PC-3 (cell line): ENCODE measurements at regions of chr16 and their contacts with region 1.

Region 1: DNA sequence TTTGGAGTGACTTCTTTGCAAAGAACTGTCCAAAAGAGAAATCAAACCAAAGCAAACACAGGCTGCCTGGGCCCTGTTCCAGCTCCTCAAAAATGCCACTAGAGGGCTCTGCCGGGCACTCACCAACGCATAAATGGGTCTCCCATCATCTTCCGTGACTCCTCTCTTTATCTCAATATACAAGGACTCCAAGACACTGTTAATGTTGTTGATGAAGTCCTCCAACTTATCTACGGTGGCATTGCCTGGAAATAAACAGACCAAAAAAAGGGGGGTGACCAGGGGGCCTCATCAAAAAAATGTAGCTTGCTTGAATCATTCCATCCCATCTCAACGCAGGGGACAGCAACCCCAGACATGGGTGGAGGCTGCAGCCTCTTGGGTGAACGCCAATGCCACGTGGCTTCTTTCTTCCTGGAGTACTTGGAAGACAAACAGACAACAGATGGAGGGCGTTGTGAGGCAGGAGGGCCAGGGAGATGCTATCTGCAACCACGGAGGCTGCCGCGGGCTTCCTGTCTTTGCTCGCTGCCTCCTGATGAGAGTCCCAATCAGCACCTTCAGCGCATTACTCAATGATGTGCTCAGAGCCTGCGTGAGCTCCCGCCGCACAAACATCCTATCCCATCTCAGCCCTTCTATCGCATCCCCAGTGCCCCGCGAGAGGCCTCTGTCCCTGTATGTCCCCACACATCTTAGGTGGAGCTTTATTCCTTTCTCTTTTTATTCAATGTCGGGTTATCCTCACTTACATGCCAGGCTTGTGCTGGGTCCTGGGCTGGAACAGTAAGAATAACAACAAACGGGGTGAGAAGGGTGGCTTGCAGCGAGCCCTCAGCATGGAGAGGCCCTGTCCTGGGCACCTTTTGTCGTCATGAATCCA is 32.0 kb downstream of the KDM8 start:
- DNase-seq: peak; percentile 68
- ATAC-seq: peak; percentile 80
- H3K4me3 ChIP-seq: no peak overlapping the region
- H3K27ac ChIP-seq: peak overlapping the region; percentile 12
- H3K4me1 ChIP-seq: peaks cover 8% of the 10 kb centered on the region; the same call in 1 of the 2 replicates
- H3K27me3 ChIP-seq: no peaks in the 10 kb centered on the region
- CTCF ChIP-seq: peak; percentile 89

Region 2: GRCh38 chr16:26913851-26914250 is 321.4 kb before region 1 on chr16:
- CTCF ChIA-PET with region 1: no interaction called
- POLR2A ChIA-PET with region 1: no interaction called
- intact Hi-C with region 1: no loop called
- DNase-seq: no peak
- ATAC-seq: no peak
- H3K4me3 ChIP-seq: no peak overlapping the region
- H3K27ac ChIP-seq: no peak overlapping the region
- H3K4me1 ChIP-seq: no peaks in the 10 kb centered on the region
- H3K27me3 ChIP-seq: 0 out of 2 replicates have a peak, but pooled peaks cover 3% of the 10 kb centered on the region
- CTCF ChIP-seq: no peak

Region 3: DNA sequence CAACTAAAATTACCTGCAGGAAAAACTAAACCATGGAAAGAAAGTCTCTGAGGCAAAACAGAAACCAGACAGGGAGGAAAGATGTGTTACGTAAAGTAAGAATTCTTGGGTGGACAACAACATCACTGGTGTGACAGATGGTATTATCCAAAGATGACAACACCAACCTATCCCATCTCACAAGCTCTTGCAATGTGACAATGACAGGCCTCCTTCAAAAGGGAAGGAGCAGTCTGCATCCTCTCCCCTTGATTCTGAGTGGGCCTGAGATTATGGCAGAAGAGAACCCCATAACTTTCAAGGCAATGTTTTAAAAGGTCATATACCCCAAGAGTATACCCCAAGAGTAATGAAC is 49.5 kb before region 1 on chr16:
- CTCF ChIA-PET with region 1: no interaction called
- POLR2A ChIA-PET with region 1: no interaction called
- intact Hi-C with region 1: no loop called
- DNase-seq: no peak
- ATAC-seq: no peak
- H3K4me3 ChIP-seq: no peak overlapping the region
- H3K27ac ChIP-seq: no peak overlapping the region
- H3K4me1 ChIP-seq: no peaks in the 10 kb centered on the region
- H3K27me3 ChIP-seq: no peaks in the 10 kb centered on the region
- CTCF ChIP-seq: no peak

Region 4: GRCh38 chr16:27313422-27314160 is 78.3 kb after region 1 on chr16 and contains the start of gene IL4R:
- CTCF ChIA-PET with region 1: no interaction called
- POLR2A ChIA-PET with region 1: interaction called, 4 read pairs
- intact Hi-C with region 1: loop called (anchors 5 kb)
- DNase-seq: peak; percentile 48
- ATAC-seq: peak; percentile 39
- H3K4me3 ChIP-seq: peak within 1 kb of the TSS; percentile 93
- H3K27ac ChIP-seq: peak within 1 kb of the TSS; percentile 98
- H3K4me1 ChIP-seq: peaks cover 36% of the 10 kb centered on the region
- H3K27me3 ChIP-seq: no peaks in the 10 kb centered on the region
- CTCF ChIP-seq: no peak
- total RNA-seq, gene IL4R: 25.1 and 32.1 TPM in 2 replicates

Region 5: GRCh38 chr16:27461483-27462171 is 226.3 kb after region 1 on chr16:
- CTCF ChIA-PET with region 1: no interaction called
- POLR2A ChIA-PET with region 1: no interaction called
- intact Hi-C with region 1: loop called (anchors 1 kb)
- DNase-seq: no peak
- ATAC-seq: no peak
- H3K4me3 ChIP-seq: no peak overlapping the region
- H3K27ac ChIP-seq: no peak overlapping the region
- H3K4me1 ChIP-seq: no peaks in the 10 kb centered on the region
- H3K27me3 ChIP-seq: no peaks in the 10 kb centered on the region
- CTCF ChIP-seq: no peak